Activated CD8-positive, alpha-beta T cell treated with anti-CD3 and anti-CD28 coated beads, Interleukin-2, amount 10 ng/mL, durations not matched to agents 7 days and 5 days (primary cell): ENCODE measurements at regions of chr15 and their contacts with region 1.

Region 1: DNA sequence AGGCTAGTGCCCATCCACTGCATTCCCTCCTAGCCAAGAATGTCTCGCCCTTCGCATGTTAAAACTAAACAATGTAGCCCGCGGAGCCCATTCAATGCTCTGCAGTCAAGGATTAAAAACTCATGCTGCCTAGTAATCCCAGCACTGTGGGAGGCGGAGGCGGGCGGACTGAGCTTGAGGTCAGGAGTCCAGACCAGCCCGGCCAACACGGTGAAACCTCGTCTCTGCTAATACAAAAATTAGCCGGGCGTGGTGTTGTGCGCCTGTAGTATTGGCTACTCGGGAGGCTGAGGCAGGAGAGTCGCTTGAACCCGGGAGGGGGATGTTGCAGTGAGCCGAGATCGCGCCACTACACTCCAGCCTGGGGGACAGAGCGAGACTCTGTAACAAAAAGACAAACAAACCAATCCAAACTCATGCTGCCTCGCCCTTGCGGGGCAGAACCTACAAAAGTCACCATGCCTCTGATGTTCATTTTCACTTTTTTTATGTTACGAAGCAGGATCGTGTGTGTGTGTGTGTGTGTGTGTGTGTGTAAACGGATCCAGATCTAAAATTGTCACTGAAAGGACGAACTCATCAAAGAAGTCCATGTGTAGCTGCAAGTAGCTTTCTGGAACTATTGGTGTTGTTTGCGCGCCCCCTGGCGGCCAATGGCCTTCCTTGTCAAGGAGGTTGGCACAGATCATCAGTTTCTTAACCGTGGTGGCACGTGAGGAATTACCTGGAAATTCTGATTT is 54.8 kb upstream of the SPESP1 start:
- DNase-seq: peak; percentile 92
- ATAC-seq: peak; percentile 88
- H3K4me3 Mint-ChIP-seq: no peak overlapping the region
- H3K27ac Mint-ChIP-seq: no peak overlapping the region
- H3K4me1 Mint-ChIP-seq: peaks cover 2% of the 10 kb centered on the region
- H3K27me3 Mint-ChIP-seq: peaks cover 37% of the 10 kb centered on the region

Region 2: DNA sequence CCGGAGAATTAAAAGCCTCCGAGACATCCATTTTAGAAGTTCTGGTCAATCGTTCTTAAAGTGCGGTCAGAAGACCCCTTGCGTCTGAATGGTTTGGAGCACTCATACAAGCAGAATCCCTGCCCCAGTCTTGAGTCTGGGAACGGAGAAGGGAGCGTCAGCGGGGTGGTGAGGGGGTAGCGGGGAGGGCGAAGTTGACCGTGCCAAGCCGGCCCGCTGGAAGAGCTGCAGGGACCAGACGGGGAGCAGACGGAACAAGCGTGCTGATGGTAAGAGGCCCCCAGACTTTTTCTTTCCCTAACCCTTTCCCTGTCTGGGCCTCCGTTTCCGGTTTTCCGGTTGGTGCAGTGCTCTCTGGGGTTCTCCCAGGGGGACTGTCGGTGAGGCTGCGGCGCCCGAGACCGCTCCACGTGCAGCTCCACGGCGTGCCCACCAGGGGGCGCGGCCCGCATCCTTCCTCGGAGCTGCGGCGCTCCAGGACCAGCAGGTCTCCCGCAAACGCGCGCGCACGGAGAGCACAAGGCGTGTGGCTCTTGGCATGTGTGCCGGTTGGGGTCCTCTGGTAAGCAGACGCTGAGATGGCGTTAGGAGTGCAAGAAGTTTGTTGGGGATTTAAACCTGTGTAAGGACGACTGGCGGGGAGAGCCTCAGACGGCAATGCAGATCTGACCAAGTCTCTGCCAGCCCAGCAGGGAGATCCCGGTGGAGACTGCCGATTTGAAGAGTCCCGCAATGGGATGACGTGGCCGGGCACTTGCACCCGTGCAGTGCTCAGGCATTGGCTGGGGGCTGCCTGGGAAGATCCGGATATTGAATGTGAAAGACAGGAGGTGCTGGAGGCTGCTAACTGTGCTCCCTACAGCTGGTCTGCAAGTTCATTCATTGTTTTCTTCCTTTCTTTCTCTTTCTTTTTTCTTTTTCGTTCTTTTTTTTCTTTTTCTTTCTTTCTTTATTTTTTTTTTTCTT is 315.9 kb before region 1 on chr15:
- CTCF ChIA-PET with region 1: interaction called, 25 read pairs
- POLR2A ChIA-PET with region 1: no interaction called
- DNase-seq: peak; percentile 76
- ATAC-seq: peak; percentile 93
- H3K4me3 Mint-ChIP-seq: peak overlapping the region; percentile 57
- H3K27ac Mint-ChIP-seq: no peak overlapping the region
- H3K4me1 Mint-ChIP-seq: peaks cover 16% of the 10 kb centered on the region
- H3K27me3 Mint-ChIP-seq: peaks cover 44% of the 10 kb centered on the region

Region 3: DNA sequence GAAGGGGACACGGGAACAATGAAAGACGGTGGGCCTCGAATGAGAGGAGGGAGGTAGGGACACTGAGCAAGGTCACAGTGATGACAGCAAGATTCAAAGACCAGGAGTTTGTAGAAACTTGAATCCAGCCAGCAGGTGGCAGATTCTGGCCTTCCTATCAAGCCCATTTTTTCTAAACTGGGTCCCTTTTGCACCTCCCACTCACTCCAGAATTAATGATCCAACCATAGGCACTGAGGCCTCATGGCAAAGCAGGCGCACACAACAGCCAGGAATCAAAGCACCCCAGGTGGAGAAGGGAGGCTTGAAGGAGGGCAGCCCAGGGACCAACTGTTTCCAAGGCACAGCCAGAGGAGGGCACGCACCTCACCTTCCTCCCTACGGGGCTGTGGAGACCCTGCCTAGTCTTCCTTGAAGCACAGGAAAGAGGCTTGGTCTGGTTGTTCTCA is 145.1 kb before region 1 on chr15:
- CTCF ChIA-PET with region 1: interaction called, 20 read pairs
- POLR2A ChIA-PET with region 1: no interaction called
- DNase-seq: peak; percentile 28
- ATAC-seq: no peak
- H3K4me3 Mint-ChIP-seq: no peak overlapping the region
- H3K27ac Mint-ChIP-seq: no peak overlapping the region
- H3K4me1 Mint-ChIP-seq: peaks cover 6% of the 10 kb centered on the region
- H3K27me3 Mint-ChIP-seq: peaks cover 10% of the 10 kb centered on the region

Region 4: GRCh38 chr15:68795298-68795848 is 80.2 kb before region 1 on chr15:
- CTCF ChIA-PET with region 1: interaction called, 15 read pairs
- POLR2A ChIA-PET with region 1: no interaction called
- DNase-seq: peak; percentile 79
- ATAC-seq: peak; percentile 63
- H3K4me3 Mint-ChIP-seq: peak overlapping the region; percentile 35
- H3K27ac Mint-ChIP-seq: peak overlapping the region; percentile 48
- H3K4me1 Mint-ChIP-seq: peaks cover 98% of the 10 kb centered on the region
- H3K27me3 Mint-ChIP-seq: no peaks in the 10 kb centered on the region

Region 5: DNA sequence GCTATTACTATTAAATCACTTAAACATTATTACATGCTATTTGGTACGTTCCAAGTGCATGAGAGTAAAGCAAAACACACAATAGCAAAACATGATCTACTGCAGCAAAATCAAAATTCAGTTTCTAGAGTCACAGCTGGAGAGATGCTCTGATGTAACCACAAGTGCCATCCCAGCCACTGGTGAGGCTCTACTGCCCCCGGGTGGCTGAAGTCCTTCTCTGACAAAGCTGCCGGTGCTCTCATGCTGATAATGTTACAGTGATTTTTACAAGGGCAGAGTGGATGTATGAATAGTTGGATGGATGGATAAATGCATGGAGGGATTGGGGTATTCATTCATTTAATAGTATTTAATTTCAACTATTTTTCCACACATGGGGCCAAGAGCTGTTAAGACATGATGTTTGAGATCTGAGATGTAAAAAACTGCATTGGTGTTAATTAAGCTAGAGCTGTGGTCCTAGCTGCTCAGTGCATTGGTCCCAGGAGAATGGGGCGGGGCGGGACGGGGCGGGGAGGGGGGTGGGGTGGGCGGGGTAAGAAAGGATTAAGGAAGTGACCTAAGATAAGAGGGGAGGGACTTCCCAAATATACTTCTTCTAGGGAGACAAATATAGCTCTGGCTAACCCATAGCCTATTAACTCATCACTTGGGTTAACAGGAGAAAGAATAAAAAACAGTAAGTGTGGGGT is 49.5 kb after region 1 on chr15:
- CTCF ChIA-PET with region 1: interaction called, 14 read pairs
- POLR2A ChIA-PET with region 1: no interaction called
- DNase-seq: peak; percentile 70
- ATAC-seq: peak; percentile 55
- H3K4me3 Mint-ChIP-seq: no peak overlapping the region
- H3K27ac Mint-ChIP-seq: no peak overlapping the region
- H3K4me1 Mint-ChIP-seq: no peaks in the 10 kb centered on the region
- H3K27me3 Mint-ChIP-seq: peaks cover 27% of the 10 kb centered on the region